ENCODE measurements at regions of chr4 and their contacts with region 1.

Region 1: DNA sequence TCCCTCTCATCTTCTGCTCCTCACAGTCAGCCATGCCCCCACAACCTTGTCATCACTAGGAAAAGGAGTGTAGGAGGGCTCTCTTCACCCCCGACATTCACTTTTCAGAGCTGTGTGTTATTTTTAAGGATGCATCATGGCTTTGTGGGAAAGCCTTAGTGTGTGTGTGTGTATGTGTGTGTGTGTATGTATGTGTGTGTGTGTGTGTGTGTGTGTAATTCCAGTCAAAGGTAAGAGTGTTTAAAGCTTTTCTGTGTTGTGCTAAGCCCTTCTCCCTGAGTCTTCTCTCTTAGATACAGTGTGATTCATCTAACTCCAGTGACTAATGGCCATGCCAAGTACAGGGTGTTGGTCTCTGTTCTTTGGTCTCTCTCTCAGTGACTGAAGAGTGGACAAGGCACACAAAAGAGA is 76.6 kb downstream of the CHIC2 start:
- DNase-seq: no peak

Region 2: DNA sequence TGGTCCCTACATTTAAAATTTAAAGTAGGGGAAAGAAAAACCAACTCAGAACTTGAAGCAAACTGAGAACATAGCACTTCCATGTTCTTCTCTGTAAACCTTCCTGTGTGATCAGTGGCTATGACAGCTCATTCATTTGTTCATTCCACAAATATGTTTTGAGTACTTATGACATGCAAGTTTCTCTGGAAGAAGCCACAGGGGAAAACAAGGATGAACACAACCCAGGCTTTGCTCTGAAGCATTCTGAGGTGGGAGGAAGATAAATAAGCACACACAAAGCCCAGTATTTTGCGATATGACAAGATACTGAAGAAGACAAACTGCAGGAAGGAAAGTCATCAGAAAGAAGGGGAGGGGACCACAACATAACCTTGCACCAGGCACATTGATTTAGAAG is 19.8 kb before region 1 on chr4:
- intact Hi-C with region 1: loop called in 1 of 2 experiments (anchors 1 kb)
- DNase-seq: no peak

Measured in posterior vena cava (tissue), 2 donors.